IMR-90 (cell line): ENCODE measurements at regions of chr3 and their contacts with region 1.

Region 1: GRCh38 chr3:51498876-51499738 is 708 bp downstream of the DCAF1 start:
- DNase-seq: peak; percentile 89
- ATAC-seq: peak; percentile 73
- H3K4me3 ChIP-seq: peak overlapping the region; percentile 80
- H3K27ac ChIP-seq: peak overlapping the region; percentile 84
- H3K4me1 ChIP-seq: no peaks in the 10 kb centered on the region
- H3K27me3 ChIP-seq: no peaks in the 10 kb centered on the region
- CTCF ChIP-seq: no peak
- POLR2A ChIP-seq: peak; percentile 55; the same call in 1 of the 2 replicates
- RAD21 ChIP-seq: no peak

Region 2: GRCh38 chr3:50986726-50987125 is 512.4 kb before region 1 on chr3:
- CTCF ChIA-PET with region 1: no interaction called
- POLR2A ChIA-PET with region 1: no interaction called
- dilution Hi-C with region 1: no loop called
- in situ Hi-C with region 1: no loop called
- intact Hi-C with region 1: no loop called
- DNase-seq: no peak
- ATAC-seq: no peak
- H3K4me3 ChIP-seq: no peak overlapping the region
- H3K27ac ChIP-seq: no peak overlapping the region
- H3K4me1 ChIP-seq: no peaks in the 10 kb centered on the region
- H3K27me3 ChIP-seq: no peaks in the 10 kb centered on the region
- CTCF ChIP-seq: no peak
- POLR2A ChIP-seq: no peak
- RAD21 ChIP-seq: no peak

Region 3: DNA sequence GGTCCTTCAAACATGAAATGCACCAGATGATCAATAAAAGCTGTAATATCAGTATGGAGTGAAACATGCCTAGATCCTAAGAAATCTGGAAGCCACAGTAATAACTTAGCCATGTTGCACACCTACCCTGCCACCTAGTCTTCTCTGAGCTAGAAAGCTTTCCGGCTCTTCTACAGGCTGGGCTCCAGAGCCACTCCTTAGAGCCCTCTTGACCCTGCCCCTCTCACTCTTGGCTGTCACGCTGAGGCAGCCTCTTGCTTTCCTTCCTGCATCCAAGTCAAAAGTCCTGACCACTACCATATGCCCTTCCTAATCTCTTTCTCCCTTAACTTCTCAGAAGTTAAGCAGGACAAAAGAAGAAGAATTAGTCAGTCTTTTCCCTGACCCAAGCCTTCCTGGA is 90.3 kb before region 1 on chr3:
- CTCF ChIA-PET with region 1: no interaction called
- POLR2A ChIA-PET with region 1: no interaction called
- dilution Hi-C with region 1: no loop called
- in situ Hi-C with region 1: no loop called
- intact Hi-C with region 1: loop called (anchors 5 kb)
- DNase-seq: no peak
- ATAC-seq: no peak
- H3K4me3 ChIP-seq: no peak overlapping the region
- H3K27ac ChIP-seq: no peak overlapping the region
- H3K4me1 ChIP-seq: no peaks in the 10 kb centered on the region
- H3K27me3 ChIP-seq: no peaks in the 10 kb centered on the region
- CTCF ChIP-seq: no peak
- POLR2A ChIP-seq: no peak
- RAD21 ChIP-seq: no peak

Region 4: DNA sequence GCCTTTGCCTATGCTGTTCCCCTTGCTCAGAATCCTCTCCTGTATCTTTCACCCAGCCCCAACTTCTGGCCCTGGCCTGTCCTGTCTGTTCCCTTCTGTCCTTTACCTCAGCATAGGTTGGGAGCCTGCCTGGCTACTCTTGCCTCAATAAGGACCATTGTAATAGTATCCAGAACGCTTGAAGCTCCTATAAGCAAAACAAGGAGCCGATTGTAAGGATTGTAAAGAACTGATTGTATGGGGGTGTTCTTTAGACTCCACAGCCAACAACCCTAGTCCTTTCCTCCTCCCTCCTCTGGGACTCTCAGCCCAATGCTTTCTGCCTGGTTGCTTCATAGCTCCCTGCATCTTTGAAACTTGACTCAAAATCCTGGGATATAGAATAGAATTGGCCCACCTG is 20.7 kb after region 1 on chr3:
- CTCF ChIA-PET with region 1: no interaction called
- POLR2A ChIA-PET with region 1: interaction called, 18 read pairs
- dilution Hi-C with region 1: no loop called
- in situ Hi-C with region 1: no loop called
- intact Hi-C with region 1: no loop called
- DNase-seq: no peak
- ATAC-seq: no peak
- H3K4me3 ChIP-seq: no peak overlapping the region
- H3K27ac ChIP-seq: no peak overlapping the region
- H3K4me1 ChIP-seq: no peaks in the 10 kb centered on the region
- H3K27me3 ChIP-seq: peaks cover 11% of the 10 kb centered on the region
- CTCF ChIP-seq: no peak
- POLR2A ChIP-seq: no peak
- RAD21 ChIP-seq: no peak

Region 5: DNA sequence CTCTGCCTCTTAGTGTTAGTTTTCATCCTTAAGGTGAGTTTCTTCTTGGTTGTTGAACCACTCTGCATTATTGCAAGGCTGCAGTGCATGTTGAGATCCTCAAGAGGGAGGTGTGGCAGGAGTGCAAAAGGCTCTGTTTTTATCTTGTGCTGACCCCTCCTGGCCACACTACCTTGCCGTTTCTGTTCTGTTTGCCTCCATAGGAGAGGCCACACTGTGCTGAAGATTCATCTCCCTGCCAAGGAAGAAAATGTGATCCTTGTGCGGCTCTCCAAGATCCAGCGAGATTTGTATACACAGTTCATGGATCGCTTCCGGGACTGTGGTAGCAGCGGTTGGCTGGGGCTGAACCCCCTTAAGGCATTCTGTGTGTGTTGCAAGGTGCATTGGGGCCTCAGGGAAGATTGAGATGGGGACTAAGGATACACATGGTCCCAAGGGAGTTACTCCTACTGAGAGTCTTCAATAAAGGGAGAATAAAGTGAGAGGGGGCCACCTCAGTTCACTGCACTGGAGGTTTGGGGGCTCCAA is 138.9 kb after region 1 on chr3:
- CTCF ChIA-PET with region 1: interaction called, 5 read pairs
- POLR2A ChIA-PET with region 1: no interaction called
- dilution Hi-C with region 1: no loop called
- in situ Hi-C with region 1: loop called (anchors 10 kb)
- intact Hi-C with region 1: loop called (anchors 1 kb)
- DNase-seq: peak; percentile 71
- ATAC-seq: peak; percentile 96
- H3K4me3 ChIP-seq: no peak overlapping the region
- H3K27ac ChIP-seq: no peak overlapping the region
- H3K4me1 ChIP-seq: no peaks in the 10 kb centered on the region
- H3K27me3 ChIP-seq: no peaks in the 10 kb centered on the region
- CTCF ChIP-seq: peak; percentile 95
- POLR2A ChIP-seq: no peak
- RAD21 ChIP-seq: peak; percentile 67

Region 6: DNA sequence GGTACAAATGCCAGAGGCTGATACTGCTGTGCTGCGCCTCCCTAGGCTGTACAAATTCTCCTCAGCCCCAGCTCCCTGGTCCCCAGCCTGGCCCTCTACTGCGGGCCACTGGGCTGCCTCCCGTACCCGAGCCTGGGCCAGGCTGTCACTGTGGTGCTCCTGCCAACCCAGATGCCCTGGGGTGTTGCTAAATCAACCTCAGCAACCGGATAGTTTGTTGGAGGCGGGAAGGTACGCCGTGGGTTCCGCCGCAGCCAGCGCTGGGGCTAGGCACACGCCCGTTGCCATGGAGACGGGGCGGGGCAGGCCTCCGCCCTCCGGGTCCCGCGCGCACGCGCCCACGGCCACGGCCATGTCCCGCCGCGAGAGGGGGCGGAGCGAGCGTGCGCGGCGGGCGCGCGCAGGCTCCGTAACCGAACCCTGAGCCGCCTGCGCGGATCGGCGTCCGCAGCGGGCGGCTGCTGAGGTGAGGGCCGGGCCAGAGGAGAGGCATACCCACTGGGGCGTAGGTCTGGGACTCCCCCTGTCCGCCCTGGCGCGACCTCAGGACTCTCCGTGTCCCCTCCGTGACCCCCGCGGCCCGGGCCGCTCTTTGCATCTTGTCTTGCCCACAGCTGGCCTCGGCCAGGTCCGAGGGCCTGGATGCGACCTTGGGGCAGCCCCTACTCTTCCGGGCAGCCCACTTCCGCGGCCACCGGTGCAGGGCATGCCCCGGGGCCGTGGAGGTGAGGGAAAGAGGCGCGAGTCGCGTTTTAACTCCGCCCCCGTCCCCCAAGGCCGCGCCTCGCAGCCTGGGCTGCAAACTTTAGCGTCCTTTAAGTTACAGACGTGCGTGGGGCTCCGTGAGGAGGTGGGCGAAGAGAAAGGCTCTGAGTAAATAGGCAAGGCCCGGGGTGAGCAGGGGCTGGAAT is 172.0 kb after region 1 on chr3 and contains the start of gene TEX264:
- CTCF ChIA-PET with region 1: interaction called, 9 read pairs
- POLR2A ChIA-PET with region 1: interaction called, 3 read pairs
- dilution Hi-C with region 1: no loop called
- in situ Hi-C with region 1: no loop called
- intact Hi-C with region 1: loop called (anchors 1 kb)
- DNase-seq: peak; percentile 71
- ATAC-seq: peak; percentile 82
- H3K4me3 ChIP-seq: peak within 1 kb of the TSS; percentile 87
- H3K27ac ChIP-seq: peak within 1 kb of the TSS; percentile 79
- H3K4me1 ChIP-seq: peaks cover 12% of the 10 kb centered on the region
- H3K27me3 ChIP-seq: no peaks in the 10 kb centered on the region
- CTCF ChIP-seq: no peak
- POLR2A ChIP-seq: peak; percentile 55; the same call in 1 of the 2 replicates
- RAD21 ChIP-seq: no peak
- total RNA-seq, gene TEX264: 26.9 and 30.3 TPM in 2 replicates

Region 7: GRCh38 chr3:51799879-51800749 is 301.0 kb after region 1 on chr3:
- CTCF ChIA-PET with region 1: interaction called, 3 read pairs
- POLR2A ChIA-PET with region 1: no interaction called
- dilution Hi-C with region 1: no loop called
- in situ Hi-C with region 1: loop called (anchors 25 kb)
- intact Hi-C with region 1: loop called (anchors 1 kb)
- DNase-seq: peak; percentile 82
- ATAC-seq: peak; percentile 85
- H3K4me3 ChIP-seq: no peak overlapping the region
- H3K27ac ChIP-seq: no peak overlapping the region
- H3K4me1 ChIP-seq: no peaks in the 10 kb centered on the region
- H3K27me3 ChIP-seq: peaks cover 9% of the 10 kb centered on the region
- CTCF ChIP-seq: peak; percentile 77
- POLR2A ChIP-seq: no peak
- RAD21 ChIP-seq: peak; percentile 63